PC-9 (cell line): ENCODE measurements at regions of chr2 and their contacts with region 1.

Region 1: DNA sequence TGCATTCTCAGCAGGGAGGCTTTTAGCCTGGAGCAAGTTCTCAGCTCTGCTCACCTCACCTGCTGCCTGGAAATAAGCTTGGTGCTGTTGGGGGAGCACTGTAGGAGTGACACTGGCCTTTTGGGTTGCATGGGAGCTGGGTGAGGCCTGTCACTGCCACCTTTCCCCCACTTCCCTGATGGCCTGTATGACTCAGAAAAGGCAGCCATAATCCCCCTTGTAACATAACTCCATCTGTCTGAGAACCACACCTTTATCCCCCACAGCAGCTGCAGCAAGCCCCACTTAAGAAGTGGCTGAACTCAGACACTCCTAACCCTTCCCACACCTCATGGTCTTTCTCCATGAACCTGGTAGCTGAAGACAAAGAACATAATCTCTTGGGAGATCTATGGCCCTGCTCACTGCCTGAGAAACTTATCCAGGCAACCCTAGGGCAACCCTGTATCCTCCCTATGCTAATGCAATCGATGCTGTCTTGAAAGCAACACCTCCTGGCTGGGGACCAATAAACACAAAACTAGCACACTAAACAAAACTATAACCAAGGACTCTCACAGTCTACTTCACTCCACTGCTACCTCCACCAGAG is 258.9 kb upstream of the OSR1 start:
- DNase-seq: peak; percentile 87 to 99
- H3K4me3 ChIP-seq: no peak overlapping the region; the same call in 1 of the 2 replicates
- H3K27ac ChIP-seq: peak overlapping the region; percentile 98
- H3K4me1 ChIP-seq: peaks cover 46% of the 10 kb centered on the region
- H3K27me3 ChIP-seq: no peaks in the 10 kb centered on the region
- CTCF ChIP-seq: no peak

Region 2: DNA sequence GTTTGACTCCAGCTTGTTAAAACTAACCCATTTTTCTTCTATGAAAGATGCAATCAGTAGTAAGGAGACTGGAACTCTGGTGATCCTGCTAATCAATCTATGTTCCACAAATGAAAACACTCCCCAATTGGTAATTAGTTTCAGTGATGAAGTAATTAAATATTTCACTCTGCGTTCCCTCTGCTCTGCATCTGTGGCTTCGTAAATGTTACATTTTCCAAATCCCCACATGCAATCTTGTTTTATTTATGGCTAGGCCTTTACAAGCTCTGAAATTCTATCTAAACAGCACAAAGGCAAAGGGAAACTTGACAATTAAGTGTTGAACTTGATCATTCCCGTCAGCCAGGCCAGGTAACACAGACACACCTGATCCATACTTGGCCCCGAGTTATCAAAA is 27.6 kb before region 1 on chr2:
- CTCF ChIA-PET with region 1: no interaction called
- POLR2A ChIA-PET with region 1: no interaction called
- intact Hi-C with region 1: no loop called
- DNase-seq: no peak
- H3K4me3 ChIP-seq: no peak overlapping the region
- H3K27ac ChIP-seq: no peak overlapping the region
- H3K4me1 ChIP-seq: 0 out of 2 replicates have a peak, but pooled peaks cover 6% of the 10 kb centered on the region
- H3K27me3 ChIP-seq: no peaks in the 10 kb centered on the region
- CTCF ChIP-seq: no peak

Region 3: DNA sequence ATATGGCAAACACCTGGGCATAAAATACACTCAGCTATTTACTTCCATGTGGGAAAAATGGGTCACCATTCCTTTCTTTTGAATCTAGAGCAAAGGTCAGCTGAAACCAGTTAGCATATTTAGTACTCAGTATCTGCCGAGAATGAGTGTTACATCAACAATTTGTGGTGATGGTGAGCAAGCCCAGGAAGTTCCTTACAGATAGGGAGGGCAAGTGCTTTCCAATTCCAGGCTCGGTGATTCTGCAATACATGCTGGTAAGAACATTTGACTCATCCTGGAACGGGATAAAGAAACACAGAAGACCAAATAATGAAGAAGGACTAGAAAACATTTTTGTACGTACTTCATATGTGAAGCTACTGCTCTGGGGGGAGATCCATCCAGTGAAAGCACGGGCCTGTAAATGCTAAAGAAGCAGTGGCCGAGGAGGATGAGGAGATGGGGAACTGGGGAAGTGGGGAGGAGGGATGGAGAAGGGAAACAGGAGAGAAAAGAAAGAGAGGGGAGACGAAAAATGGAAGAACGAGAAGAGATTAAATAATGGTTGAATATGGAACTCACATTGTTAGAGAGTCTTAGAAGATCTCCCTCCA is 32.5 kb after region 1 on chr2:
- CTCF ChIA-PET with region 1: no interaction called
- POLR2A ChIA-PET with region 1: no interaction called
- intact Hi-C with region 1: no loop called
- DNase-seq: peak; percentile 25 to 87
- H3K4me3 ChIP-seq: no peak overlapping the region
- H3K27ac ChIP-seq: peak overlapping the region; percentile 76
- H3K4me1 ChIP-seq: peaks cover 25% of the 10 kb centered on the region
- H3K27me3 ChIP-seq: no peaks in the 10 kb centered on the region
- CTCF ChIP-seq: no peak

Region 4: DNA sequence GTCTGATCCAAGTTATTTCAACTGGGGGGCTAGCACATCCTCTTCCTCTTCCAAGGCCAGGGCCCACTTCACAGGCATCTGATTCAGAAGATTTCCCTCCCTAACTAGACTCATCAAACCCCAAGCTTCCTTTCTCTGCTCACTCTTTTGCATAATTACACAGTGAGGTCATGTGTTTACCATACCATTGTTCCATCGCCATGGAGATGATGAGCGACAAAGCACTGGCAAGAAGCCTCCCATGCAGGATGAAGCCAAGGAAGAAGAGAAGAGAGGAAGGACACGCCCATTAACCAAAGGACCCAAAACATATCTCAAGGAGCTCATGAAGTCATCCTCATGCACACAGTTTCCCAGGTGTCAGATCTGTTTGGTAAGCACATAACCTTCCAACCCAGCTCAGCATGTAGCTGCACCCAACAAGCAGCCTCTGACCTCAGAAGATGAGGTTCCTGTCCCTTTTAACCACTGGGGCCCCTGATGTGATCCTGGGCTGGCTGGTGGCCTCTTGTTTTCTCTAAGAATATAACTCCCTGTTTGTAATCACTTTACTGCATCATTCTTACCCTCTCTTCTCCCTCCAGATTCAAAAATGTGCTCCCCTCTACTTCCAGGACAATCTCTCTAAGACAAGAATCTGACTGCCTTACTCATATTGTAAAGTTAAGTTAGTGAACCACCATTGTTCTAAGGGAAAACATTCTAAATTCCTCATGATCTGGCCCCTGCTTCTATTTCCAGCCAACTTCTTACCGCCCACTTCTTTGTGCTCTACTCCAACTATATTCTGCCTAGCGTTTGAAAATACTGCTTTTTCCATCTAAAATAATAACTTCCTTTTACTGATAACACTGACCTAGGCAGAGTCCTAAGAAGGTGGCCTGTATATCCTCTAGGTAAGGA is 94.4 kb after region 1 on chr2:
- CTCF ChIA-PET with region 1: no interaction called
- POLR2A ChIA-PET with region 1: no interaction called
- intact Hi-C with region 1: loop called (anchors 2 kb)
- DNase-seq: peak; percentile 65 to 90
- H3K4me3 ChIP-seq: no peak overlapping the region
- H3K27ac ChIP-seq: 0 out of 2 replicates have a peak overlapping the region, but pooled peaks have one; percentile 5
- H3K4me1 ChIP-seq: peaks cover 14% of the 10 kb centered on the region
- H3K27me3 ChIP-seq: no peaks in the 10 kb centered on the region
- CTCF ChIP-seq: no peak

Region 5: DNA sequence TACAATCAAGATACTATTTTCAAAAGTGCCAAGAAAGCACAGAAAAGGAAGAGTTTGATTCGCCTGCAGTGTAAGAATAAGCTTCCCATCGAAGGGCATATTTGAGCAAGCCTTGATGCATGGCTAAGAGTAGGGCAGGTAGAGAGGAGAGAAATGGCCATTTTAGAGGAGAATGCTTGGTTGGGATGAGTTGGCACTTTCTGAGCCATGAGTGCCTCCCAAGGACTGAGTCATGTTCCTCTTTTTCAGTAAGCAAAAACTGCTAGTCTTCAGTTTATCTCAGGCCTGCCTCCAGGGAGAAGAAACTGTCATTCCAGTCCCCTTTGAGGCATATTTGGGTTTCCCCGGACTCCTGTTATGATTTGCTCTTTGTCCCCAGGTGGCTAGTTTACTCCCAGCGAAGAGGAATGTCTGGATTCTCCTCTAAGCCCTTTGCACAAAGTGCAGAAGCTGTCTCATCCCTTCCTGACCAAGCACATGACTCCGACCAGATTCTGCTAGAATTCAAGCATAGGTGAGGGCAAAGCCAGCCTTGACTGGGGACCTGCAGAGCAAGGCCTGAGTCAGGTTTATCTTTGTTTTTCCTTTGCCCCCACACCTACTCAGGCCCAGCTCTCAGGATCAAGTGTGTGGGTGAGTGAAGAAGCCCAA is 169.2 kb after region 1 on chr2:
- CTCF ChIA-PET with region 1: no interaction called
- POLR2A ChIA-PET with region 1: interaction called, 4 read pairs
- intact Hi-C with region 1: loop called (anchors 1 kb)
- DNase-seq: peak; percentile 65 to 94
- H3K4me3 ChIP-seq: 0 out of 2 replicates have a peak overlapping the region, but pooled peaks have one; percentile 2
- H3K27ac ChIP-seq: peak overlapping the region; percentile 100
- H3K4me1 ChIP-seq: peaks cover 55% of the 10 kb centered on the region
- H3K27me3 ChIP-seq: no peaks in the 10 kb centered on the region
- CTCF ChIP-seq: no peak

Region 6: DNA sequence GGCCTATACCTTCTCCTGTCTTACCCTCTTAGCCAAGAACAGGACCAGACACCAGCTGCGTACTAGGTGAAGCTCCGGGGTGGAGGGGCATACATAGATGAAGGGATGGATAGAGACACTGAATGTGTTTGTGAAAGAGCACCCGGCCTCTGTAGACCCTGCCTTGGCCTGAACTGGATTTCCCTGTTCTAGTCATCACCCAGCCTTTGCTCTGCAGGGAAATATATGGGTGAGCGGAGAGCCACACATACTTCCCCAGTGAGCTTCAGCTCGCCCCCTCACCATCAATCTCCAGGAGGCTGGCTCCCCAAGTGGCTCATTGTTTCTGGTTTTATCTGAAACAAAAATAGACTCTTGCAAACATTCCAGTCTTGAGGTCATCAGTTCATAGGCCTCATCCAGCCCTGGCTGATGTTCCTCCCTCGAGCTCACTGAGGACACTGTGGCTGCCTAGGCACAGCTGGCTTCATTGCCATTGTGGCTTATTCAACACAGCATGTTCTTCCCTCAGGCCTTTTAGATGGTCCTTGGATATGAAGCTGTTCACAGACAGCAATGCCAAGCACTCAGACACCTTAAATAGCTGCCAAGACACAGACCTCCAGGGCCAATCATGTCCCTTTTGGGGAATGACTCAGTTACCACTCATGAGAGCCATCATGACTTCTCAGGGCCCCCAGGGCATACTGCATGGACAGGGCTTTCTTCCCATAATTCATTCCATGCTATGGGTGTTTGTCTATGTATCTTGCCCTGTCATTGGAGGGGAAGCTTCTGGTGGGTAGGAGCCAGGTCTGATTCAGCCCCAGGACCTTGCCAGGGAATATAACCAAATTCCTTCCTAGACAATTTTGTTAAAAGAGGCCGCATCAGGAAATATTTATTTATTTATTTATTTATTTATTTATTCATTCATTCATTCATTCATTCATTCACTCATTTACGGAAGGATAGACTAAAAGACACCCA is 202.0 kb after region 1 on chr2:
- CTCF ChIA-PET with region 1: no interaction called
- POLR2A ChIA-PET with region 1: no interaction called
- intact Hi-C with region 1: loop called (anchors 1 kb)
- DNase-seq: peak; percentile 74 to 96
- H3K4me3 ChIP-seq: no peak overlapping the region
- H3K27ac ChIP-seq: peak overlapping the region; percentile 63
- H3K4me1 ChIP-seq: peaks cover 24% of the 10 kb centered on the region
- H3K27me3 ChIP-seq: no peaks in the 10 kb centered on the region
- CTCF ChIP-seq: no peak

Region 7: GRCh38 chr2:20378792-20379519 is 761.6 kb after region 1 on chr2:
- CTCF ChIA-PET with region 1: no interaction called
- POLR2A ChIA-PET with region 1: no interaction called
- intact Hi-C with region 1: no loop called
- DNase-seq: peak; percentile 46 to 72
- H3K4me3 ChIP-seq: no peak overlapping the region
- H3K27ac ChIP-seq: no peak overlapping the region
- H3K4me1 ChIP-seq: no peaks in the 10 kb centered on the region
- H3K27me3 ChIP-seq: no peaks in the 10 kb centered on the region
- CTCF ChIP-seq: peak; percentile 77